ENCODE measurements at regions of chr6 and their contacts with region 1.

Region 1: DNA sequence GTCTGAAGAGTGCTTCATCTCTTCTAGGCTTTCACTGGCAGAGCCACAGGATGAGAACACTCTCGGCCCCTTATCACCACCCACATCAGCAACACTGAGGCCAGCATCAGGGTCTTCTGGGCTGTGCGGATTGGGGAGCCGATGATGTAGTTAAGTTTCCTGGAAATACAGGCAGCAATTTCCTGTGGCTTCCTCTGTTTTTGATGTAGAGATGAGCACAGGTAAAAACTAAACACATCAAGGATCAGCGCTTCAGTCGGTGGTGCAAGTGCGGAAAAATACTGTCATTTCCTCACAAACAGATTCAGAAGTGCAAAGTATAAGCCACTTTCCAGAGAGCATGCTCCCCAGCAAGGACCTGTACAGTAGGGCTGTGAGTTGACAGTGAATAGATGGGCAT is 62.6 kb downstream of the BACH2 start:
- DNase-seq: peak; percentile 77
- H3K4me3 Mint-ChIP-seq: peak overlapping the region; percentile 60
- H3K27ac Mint-ChIP-seq: peak overlapping the region; percentile 95
- H3K4me1 Mint-ChIP-seq: peaks cover 94% of the 10 kb centered on the region
- H3K27me3 Mint-ChIP-seq: no peaks in the 10 kb centered on the region

Region 2: DNA sequence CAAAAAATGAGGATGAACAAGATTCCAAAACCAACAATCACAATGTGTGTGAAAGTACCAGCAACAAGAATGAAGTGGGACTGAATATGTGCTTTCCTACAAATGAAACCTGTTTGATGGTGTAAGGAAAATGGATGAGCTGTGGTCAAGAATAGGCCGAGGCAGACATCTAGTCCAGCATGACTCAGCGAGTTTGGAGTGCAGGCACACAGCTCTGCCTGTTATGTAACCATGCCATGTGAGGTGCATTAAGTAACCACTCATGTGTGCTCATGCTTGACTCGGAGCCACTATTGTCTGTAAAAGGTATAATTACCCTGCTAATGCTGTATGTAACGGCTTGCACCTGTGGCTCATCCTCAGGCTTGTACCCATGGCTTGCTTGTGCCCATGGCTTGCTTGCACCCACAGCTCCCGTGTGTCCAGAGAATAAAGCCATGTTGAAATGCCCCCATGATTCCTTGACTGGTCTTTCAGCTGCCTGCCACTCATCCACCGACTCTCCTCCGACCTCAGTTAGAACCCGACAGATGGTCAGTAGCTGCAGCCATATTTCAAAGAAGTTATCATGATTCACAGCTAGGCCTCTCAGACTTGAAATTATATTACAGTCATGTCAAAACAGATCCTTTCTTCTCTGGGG is 36.0 kb before region 1 on chr6:
- CTCF ChIA-PET with region 1: no interaction called
- intact Hi-C with region 1: loop called (anchors 1 kb)
- DNase-seq: peak; percentile 47
- H3K4me3 Mint-ChIP-seq: no peak overlapping the region
- H3K27ac Mint-ChIP-seq: peak overlapping the region; percentile 80
- H3K4me1 Mint-ChIP-seq: peaks cover 92% of the 10 kb centered on the region
- H3K27me3 Mint-ChIP-seq: no peaks in the 10 kb centered on the region

Region 3: GRCh38 chr6:90222724-90223198 is 11.2 kb before region 1 on chr6:
- CTCF ChIA-PET with region 1: interaction called, 6 read pairs
- intact Hi-C with region 1: loop called (anchors 1 kb)
- DNase-seq: peak; percentile 75
- H3K4me3 Mint-ChIP-seq: peak overlapping the region; percentile 7
- H3K27ac Mint-ChIP-seq: peak overlapping the region; percentile 47
- H3K4me1 Mint-ChIP-seq: peaks cover 53% of the 10 kb centered on the region
- H3K27me3 Mint-ChIP-seq: no peaks in the 10 kb centered on the region

Region 4: DNA sequence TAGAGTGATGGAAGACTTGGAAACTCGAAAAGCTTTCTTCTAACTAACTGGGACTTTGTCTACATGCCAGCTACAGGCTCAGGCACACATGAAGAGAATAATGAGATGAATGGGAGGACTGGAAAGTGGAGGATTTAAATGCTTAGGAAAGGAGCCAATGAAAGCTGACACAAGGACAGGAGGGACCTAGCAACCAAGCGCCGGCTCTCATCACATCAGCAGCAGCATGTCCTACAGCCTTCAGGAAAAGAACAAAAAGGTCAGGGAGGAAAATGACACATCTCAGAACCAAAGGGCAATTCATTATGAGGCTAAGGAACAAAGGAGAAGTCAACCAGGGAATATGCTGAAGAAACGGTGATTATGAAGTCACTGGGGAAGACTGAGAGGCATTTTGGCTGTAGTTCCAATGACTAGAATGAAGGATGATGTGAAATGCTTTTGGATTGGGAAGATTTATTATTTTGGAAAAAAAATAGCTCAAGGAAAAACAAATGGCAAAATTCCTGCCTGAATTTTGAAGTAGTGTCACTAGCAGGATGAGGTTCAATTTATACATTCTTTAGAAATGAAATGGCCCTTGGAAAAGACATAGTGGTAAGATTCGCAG is 56.9 kb after region 1 on chr6:
- CTCF ChIA-PET with region 1: no interaction called
- intact Hi-C with region 1: no loop called
- DNase-seq: no peak
- H3K4me3 Mint-ChIP-seq: peak overlapping the region; percentile 86
- H3K27ac Mint-ChIP-seq: peak overlapping the region; percentile 97
- H3K4me1 Mint-ChIP-seq: peaks cover 75% of the 10 kb centered on the region
- H3K27me3 Mint-ChIP-seq: no peaks in the 10 kb centered on the region

Measured in activated naive CD4-positive, alpha-beta T cell treated with anti-CD3 and anti-CD28 coated beads for 36 hours (primary cell).